HCT116 (cell line): ENCODE measurements at regions of chr17 and their contacts with region 1.

Region 1: DNA sequence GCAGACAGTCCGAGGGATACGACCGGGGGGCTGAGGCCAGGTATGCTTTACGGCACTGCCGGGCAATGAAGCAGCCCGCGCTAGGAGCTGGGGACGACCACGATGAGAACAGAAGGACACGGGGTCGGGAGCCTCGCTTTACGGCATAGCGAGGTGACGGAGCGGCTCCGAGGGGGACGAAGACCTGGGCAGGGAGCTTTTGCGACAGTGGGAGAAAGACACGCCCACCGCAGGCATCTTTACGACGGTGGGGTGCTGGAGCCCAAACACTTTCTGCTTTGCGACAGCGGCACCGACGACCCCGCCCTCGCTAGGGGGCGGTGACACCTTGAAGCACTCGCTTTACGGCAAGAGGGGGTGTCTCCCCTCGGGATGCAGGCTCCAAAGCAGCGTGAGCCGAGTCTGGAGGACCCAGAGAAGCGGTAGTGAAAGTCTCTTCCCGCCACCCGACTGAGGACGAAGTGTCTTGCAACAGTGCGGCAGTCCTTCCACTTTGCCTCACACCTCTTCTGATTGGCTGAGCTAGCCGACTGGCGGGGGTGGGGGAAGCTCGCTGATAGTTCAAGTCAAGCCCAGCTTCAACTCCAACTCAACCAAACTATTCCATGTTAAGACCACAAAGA is 350 bp upstream of the NEURL4 start:
- DNase-seq: peak; percentile 99
- ATAC-seq: peak; percentile 78
- H3K4me3 ChIP-seq: peak overlapping the region; percentile 98 to 99
- H3K27ac ChIP-seq: peak overlapping the region; percentile 81
- H3K4me1 ChIP-seq: peaks cover 3 to 29% of the 10 kb centered on the region in 2 experiments; a peak in 3 of 4 replicates
- H3K27me3 ChIP-seq: no peaks in the 10 kb centered on the region
- CTCF ChIP-seq: no peak
- POLR2A ChIP-seq: peak; percentile 29
- RAD21 ChIP-seq: no peak

Region 2: GRCh38 chr17:7261172-7261927 is 68.1 kb before region 1 on chr17:
- CTCF ChIA-PET with region 1: no interaction called
- POLR2A ChIA-PET with region 1: interaction called, 10 read pairs
- RAD21 ChIA-PET with region 1: no interaction called
- intact Hi-C with region 1: no loop called
- DNase-seq: no peak
- ATAC-seq: peak; percentile 48
- H3K4me3 ChIP-seq: peak overlapping the region; percentile 98 to 99
- H3K27ac ChIP-seq: peak overlapping the region; percentile 94
- H3K4me1 ChIP-seq: peaks cover 38 to 60% of the 10 kb centered on the region in 2 experiments
- H3K27me3 ChIP-seq: no peaks in the 10 kb centered on the region
- CTCF ChIP-seq: no peak
- POLR2A ChIP-seq: no peak
- RAD21 ChIP-seq: no peak

Region 3: GRCh38 chr17:7314719-7315569 is 14.5 kb before region 1 on chr17 and contains the start of gene GPS2:
- CTCF ChIA-PET with region 1: interaction called, 5 read pairs
- POLR2A ChIA-PET with region 1: interaction called, 11 read pairs
- RAD21 ChIA-PET with region 1: no interaction called
- intact Hi-C with region 1: no loop called
- DNase-seq: peak; percentile 63
- ATAC-seq: peak; percentile 77
- H3K4me3 ChIP-seq: peak within 1 kb of the TSS; percentile 81 to 96
- H3K27ac ChIP-seq: peak within 1 kb of the TSS; percentile 93
- H3K4me1 ChIP-seq: peaks cover 24 to 51% of the 10 kb centered on the region in 2 experiments
- H3K27me3 ChIP-seq: no peaks in the 10 kb centered on the region
- CTCF ChIP-seq: no peak
- POLR2A ChIP-seq: peak; percentile 46
- RAD21 ChIP-seq: no peak
- total RNA-seq, gene GPS2: 61.3 TPM

Region 4: DNA sequence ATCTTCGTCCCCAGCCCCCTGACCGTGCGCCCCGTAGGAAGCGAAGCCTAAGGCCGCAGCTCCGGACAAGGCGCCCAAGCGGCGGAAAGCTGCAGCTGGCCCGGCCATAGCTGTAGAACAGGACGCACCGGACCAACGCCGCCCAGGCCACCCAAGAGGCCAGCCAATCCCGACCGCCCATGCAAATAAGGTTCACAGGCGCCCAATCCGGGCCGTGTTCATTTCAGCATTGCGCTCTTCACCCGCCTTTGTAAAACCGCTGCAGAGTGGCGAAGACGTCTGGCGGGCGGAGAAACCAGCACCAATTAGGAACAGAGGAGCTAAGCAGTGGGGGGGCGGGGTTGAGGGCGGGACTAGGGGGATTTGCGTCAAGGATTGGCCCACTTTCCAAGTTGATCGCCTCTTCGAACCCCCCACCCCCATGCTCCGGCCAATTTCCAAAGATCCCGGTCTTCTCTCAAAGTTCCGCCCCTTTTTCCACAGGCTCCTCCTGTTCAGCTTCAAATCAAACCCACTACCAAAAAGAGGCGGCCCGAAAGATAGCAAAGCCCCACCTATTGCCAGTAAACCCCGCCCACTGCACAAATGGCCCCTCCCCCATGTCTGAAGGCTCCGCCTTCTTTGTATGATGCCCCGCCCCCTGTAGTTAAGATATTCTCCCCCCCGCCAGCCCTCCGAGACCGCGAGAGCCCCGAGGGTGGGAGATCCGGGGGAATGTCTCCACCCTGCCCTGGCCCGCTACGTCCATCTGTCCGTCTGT is 74.7 kb after region 1 on chr17 and contains the start of gene TMEM256:
- CTCF ChIA-PET with region 1: no interaction called
- POLR2A ChIA-PET with region 1: interaction called, 11 read pairs
- RAD21 ChIA-PET with region 1: interaction called in 1 of 2 experiments, 3 read pairs
- intact Hi-C with region 1: no loop called
- DNase-seq: peak; percentile 98
- ATAC-seq: peak; percentile 88
- H3K4me3 ChIP-seq: peak within 1 kb of the TSS; percentile 61 to 83
- H3K27ac ChIP-seq: peak within 1 kb of the TSS; percentile 70
- H3K4me1 ChIP-seq: peaks cover 33 to 48% of the 10 kb centered on the region in 2 experiments
- H3K27me3 ChIP-seq: no peaks in the 10 kb centered on the region
- CTCF ChIP-seq: no peak
- POLR2A ChIP-seq: peak; percentile 87
- RAD21 ChIP-seq: no peak
- total RNA-seq, gene TMEM256: 110 TPM

Region 5: GRCh38 chr17:7511108-7511507 is 181.6 kb after region 1 on chr17:
- CTCF ChIA-PET with region 1: no interaction called
- POLR2A ChIA-PET with region 1: no interaction called
- RAD21 ChIA-PET with region 1: no interaction called
- intact Hi-C with region 1: no loop called
- DNase-seq: no peak
- ATAC-seq: no peak
- H3K4me3 ChIP-seq: no peak overlapping the region
- H3K27ac ChIP-seq: no peak overlapping the region
- H3K4me1 ChIP-seq: no peaks in the 10 kb centered on the region
- H3K27me3 ChIP-seq: no peaks in the 10 kb centered on the region
- CTCF ChIP-seq: no peak
- POLR2A ChIP-seq: no peak
- RAD21 ChIP-seq: no peak